Mammary epithelial cell (primary cell): ENCODE measurements at regions of chr16 and their contacts with region 1.

Region 1: DNA sequence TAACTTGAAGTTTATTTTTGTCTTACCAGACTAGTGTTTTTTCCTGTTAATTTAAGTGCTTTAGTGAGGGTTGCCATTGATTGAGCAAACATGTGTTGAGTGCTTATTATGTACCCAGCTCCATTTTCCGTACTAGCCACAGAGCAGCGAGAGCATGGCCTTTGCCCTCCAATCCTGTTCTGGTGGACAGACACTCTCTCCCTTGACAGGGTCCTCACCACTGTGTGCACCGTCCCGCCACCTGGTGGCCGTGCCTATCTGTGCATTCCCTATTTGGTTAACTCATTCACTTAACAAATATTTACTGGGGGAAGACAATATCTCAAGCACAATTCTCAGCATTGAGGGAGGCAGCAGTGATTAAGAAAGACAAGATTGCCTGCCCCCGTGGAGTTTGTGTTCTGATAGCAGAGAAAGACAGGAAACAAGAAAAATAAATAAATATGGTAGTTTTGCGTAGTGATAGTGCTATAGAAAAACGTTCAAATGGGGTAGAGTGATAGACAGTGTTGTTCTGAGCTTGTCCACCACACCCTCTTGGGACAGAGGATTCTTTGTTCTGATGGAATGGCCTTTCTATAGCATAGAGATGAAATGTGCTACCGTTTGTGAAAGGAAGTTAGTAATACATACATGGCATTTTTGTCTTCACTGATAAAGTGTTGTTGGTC is 13.0 kb downstream of the CDH13 start:
- DNase-seq: peak; percentile 67
- H3K4me3 ChIP-seq: no peak overlapping the region
- H3K27ac ChIP-seq: peak overlapping the region; percentile 75
- H3K4me1 ChIP-seq: peaks cover 62% of the 10 kb centered on the region
- H3K27me3 ChIP-seq: no peaks in the 10 kb centered on the region
- CTCF ChIP-seq: peak; percentile 86 to 94

Region 2: GRCh38 chr16:82603784-82604411 is 35.9 kb before region 1 on chr16:
- CTCF ChIA-PET with region 1: no interaction called
- dilution Hi-C with region 1: no loop called
- in situ Hi-C with region 1: no loop called
- intact Hi-C with region 1: loop called (anchors 1 kb)
- DNase-seq: peak; percentile 62
- H3K4me3 ChIP-seq: no peak overlapping the region
- H3K27ac ChIP-seq: no peak overlapping the region
- H3K4me1 ChIP-seq: no peaks in the 10 kb centered on the region
- H3K27me3 ChIP-seq: no peaks in the 10 kb centered on the region
- CTCF ChIP-seq: peak; percentile 54 to 83

Region 3: DNA sequence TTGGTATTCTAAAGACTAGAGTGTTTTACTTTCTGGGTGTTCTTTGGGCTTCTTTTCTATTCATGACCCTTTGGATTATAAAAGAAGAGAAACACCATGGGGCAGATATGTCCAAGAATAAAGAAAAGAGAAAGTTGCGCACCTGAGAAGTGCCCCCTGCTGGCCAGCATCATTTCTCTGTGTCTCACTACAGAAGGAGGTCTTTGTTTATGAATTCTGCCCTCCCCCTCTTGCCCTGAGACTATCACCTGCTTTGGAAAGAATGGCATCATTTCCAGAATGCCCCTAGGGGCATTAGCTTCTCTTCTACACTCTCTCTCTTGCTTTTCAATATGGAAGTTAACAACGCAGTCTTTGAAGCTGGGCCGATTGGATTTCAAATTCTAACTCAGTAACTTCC is 31.9 kb after region 1 on chr16:
- CTCF ChIA-PET with region 1: interaction called, 5 read pairs
- dilution Hi-C with region 1: no loop called
- in situ Hi-C with region 1: no loop called
- intact Hi-C with region 1: loop called (anchors 2 kb)
- DNase-seq: no peak
- H3K4me3 ChIP-seq: no peak overlapping the region
- H3K27ac ChIP-seq: no peak overlapping the region
- H3K4me1 ChIP-seq: peaks cover 6% of the 10 kb centered on the region
- H3K27me3 ChIP-seq: no peaks in the 10 kb centered on the region
- CTCF ChIP-seq: peak; percentile 23 to 26

Region 4: GRCh38 chr16:83356266-83356665 is 716.5 kb after region 1 on chr16:
- CTCF ChIA-PET with region 1: no interaction called
- dilution Hi-C with region 1: no loop called
- in situ Hi-C with region 1: no loop called
- intact Hi-C with region 1: loop called (anchors 10 kb)
- DNase-seq: peak; percentile 83
- H3K4me3 ChIP-seq: no peak overlapping the region
- H3K27ac ChIP-seq: no peak overlapping the region
- H3K4me1 ChIP-seq: no peaks in the 10 kb centered on the region
- H3K27me3 ChIP-seq: no peaks in the 10 kb centered on the region
- CTCF ChIP-seq: peak; percentile 75 to 81

Region 5: GRCh38 chr16:83441517-83441916 is 801.7 kb after region 1 on chr16:
- CTCF ChIA-PET with region 1: interaction called, 5 read pairs
- dilution Hi-C with region 1: no loop called
- in situ Hi-C with region 1: loop called in 1 of 2 experiments (anchors 25 kb)
- intact Hi-C with region 1: no loop called
- DNase-seq: peak; percentile 36
- H3K4me3 ChIP-seq: no peak overlapping the region
- H3K27ac ChIP-seq: no peak overlapping the region
- H3K4me1 ChIP-seq: no peaks in the 10 kb centered on the region
- H3K27me3 ChIP-seq: no peaks in the 10 kb centered on the region
- CTCF ChIP-seq: no peak

Region 6: GRCh38 chr16:83807710-83808572 is 1168.1 kb after region 1 on chr16 and contains the start of gene HSBP1:
- CTCF ChIA-PET with region 1: no interaction called
- dilution Hi-C with region 1: no loop called
- in situ Hi-C with region 1: no loop called
- intact Hi-C with region 1: loop called (anchors 10 kb)
- DNase-seq: peak; percentile 86
- H3K4me3 ChIP-seq: peak within 1 kb of the TSS; percentile 84 to 94 (median 92)
- H3K27ac ChIP-seq: peak within 1 kb of the TSS; percentile 60
- H3K4me1 ChIP-seq: peaks cover 4% of the 10 kb centered on the region
- H3K27me3 ChIP-seq: no peaks in the 10 kb centered on the region
- CTCF ChIP-seq: no peak
- total RNA-seq, gene HSBP1: 17.7 to 130 TPM